ENCODE measurements at regions of chr9 and their contacts with region 1.

Region 1: GRCh38 chr9:72460342-72461312 is 60.8 kb upstream of the TMC1 start:
- DNase-seq: no peak
- H3K4me3 ChIP-seq: no peak overlapping the region
- H3K27ac ChIP-seq: no peak overlapping the region
- H3K4me1 ChIP-seq: no peaks in the 10 kb centered on the region
- H3K27me3 ChIP-seq: no peaks in the 10 kb centered on the region
- CTCF ChIP-seq: no peak
- POLR2A ChIP-seq: no peak

Region 2: DNA sequence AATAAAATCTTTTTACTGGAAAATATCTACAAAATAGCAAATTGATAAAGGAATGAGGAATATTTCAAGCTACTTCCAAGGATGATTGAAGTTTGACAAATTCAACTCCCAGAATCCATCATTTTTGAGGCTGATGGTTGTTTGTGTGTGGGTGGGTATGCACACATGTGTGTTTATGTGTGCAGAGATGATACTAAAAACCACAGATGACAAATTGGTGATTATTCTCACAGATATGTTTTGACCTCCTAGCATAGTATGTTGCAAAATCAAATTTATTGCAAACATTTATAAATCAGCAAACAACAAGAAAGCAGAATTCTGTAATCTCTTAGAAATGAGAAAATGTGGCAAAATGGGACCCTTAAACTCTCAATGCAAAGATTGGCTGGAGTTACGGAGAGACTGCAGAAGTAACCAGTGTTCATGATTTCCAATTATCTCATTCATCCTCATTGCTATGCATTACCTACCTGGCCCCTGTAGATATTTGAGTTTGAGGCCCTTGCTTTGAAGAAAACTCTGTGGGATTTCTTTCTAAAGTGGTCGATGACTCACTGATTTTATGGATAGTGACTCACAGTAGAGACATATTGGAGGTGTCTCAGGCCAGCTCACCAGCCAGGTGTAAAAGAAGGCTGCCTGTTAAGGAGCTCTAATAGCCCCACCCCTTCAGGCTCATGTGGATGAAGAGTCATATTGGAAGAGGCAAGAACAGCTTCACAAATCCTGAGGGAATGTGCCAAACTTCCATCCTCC is 16.2 kb after region 1 on chr9:
- intact Hi-C with region 1: no loop called
- DNase-seq: no peak
- H3K4me3 ChIP-seq: no peak overlapping the region
- H3K27ac ChIP-seq: peak overlapping the region; percentile 6
- H3K4me1 ChIP-seq: peaks cover 21% of the 10 kb centered on the region
- H3K27me3 ChIP-seq: no peaks in the 10 kb centered on the region
- CTCF ChIP-seq: no peak
- POLR2A ChIP-seq: no peak

Region 3: DNA sequence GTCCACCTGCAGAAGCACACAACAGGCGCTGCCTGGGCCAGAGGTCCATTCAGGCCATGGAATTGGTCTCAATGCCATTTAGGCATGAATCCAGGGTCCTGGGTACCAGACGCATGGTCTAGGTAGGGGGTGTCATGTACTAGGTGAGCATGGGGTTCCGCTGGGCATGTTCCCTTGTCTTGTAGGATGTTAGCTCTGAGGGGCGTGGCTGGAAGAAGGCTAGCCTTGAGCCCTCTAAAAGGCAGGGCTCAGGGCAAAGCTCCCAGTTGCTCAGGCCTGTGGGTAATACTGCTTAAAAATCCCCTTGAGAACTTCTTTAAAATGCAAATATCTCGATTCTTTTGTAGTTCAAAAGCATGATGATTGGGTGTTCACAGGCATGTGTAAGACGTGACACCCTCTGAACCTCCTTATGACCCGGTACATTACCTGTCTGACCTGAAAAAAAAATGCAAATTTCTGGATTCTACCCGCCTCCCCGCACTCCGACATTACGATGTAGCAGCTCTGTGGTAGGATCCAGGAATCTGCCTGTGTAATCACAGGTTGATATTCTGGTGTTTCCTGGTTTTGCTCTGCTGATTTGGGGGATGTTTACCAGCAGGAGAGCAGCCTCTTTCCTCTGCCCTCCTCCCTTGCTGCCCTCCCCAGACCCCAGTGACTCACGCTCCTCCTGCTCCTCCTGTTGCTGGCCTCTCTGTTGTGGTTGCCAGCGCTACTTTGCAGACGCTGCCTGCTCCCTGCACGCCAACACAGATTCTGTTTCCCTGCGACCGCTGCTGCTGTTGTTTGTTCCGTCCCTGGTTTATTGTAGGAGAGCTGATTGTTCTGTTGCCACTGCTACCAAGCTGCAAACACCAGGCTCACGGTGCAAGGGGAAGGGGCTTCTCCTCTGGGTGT is 66.5 kb after region 1 on chr9:
- intact Hi-C with region 1: loop called (anchors 2 kb)
- DNase-seq: no peak
- H3K4me3 ChIP-seq: peak overlapping the region; percentile 3 to 28
- H3K27ac ChIP-seq: peak overlapping the region; percentile 69
- H3K4me1 ChIP-seq: peaks cover 25% of the 10 kb centered on the region
- H3K27me3 ChIP-seq: no peaks in the 10 kb centered on the region
- CTCF ChIP-seq: no peak
- POLR2A ChIP-seq: no peak

Measured in vagina (tissue), 2 donors.